Activated naive CD4-positive, alpha-beta T cell treated with anti-CD3 and anti-CD28 coated beads for 36 hours (primary cell): ENCODE measurements at regions of chr12 and their contacts with region 1.

Region 1: GRCh38 chr12:66829660-66830325 is 150.9 kb upstream of the GRIP1 start:
- DNase-seq: peak; percentile 49
- H3K4me3 Mint-ChIP-seq: no peak overlapping the region
- H3K27ac Mint-ChIP-seq: peak overlapping the region; percentile 34
- H3K4me1 Mint-ChIP-seq: peaks cover 41% of the 10 kb centered on the region
- H3K27me3 Mint-ChIP-seq: no peaks in the 10 kb centered on the region

Region 2: DNA sequence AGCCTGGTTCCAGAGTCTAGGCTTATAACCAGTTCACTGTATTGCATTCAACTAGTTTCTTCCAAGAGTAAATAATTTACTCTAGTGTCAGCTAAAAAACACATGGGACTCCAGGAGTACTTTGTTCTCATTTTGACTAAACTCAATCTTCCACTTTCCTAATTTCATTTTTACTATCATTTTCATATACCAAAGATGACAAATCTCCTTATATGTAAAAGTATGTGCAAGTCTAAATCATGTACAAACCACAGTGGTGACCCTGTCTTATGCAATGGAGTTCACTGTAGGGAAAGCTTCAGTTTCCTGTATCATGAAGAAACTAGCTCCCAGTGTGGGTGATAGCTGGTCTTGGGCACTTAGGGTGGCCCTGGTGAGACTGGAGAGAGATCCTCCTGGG is 375.9 kb before region 1 on chr12:
- CTCF ChIA-PET with region 1: no interaction called
- intact Hi-C with region 1: no loop called
- DNase-seq: peak; percentile 13
- H3K4me3 Mint-ChIP-seq: no peak overlapping the region
- H3K27ac Mint-ChIP-seq: no peak overlapping the region
- H3K4me1 Mint-ChIP-seq: peaks cover 8% of the 10 kb centered on the region
- H3K27me3 Mint-ChIP-seq: no peaks in the 10 kb centered on the region

Region 3: GRCh38 chr12:66813137-66813892 is 16.5 kb before region 1 on chr12:
- CTCF ChIA-PET with region 1: interaction called, 3 read pairs
- intact Hi-C with region 1: loop called (anchors 2 kb)
- DNase-seq: peak; percentile 62
- H3K4me3 Mint-ChIP-seq: no peak overlapping the region
- H3K27ac Mint-ChIP-seq: no peak overlapping the region
- H3K4me1 Mint-ChIP-seq: peaks cover 11% of the 10 kb centered on the region
- H3K27me3 Mint-ChIP-seq: no peaks in the 10 kb centered on the region

Region 4: GRCh38 chr12:67263471-67263870 is 433.7 kb after region 1 on chr12:
- CTCF ChIA-PET with region 1: no interaction called
- intact Hi-C with region 1: no loop called
- DNase-seq: no peak
- H3K4me3 Mint-ChIP-seq: no peak overlapping the region
- H3K27ac Mint-ChIP-seq: no peak overlapping the region
- H3K4me1 Mint-ChIP-seq: peaks cover 3% of the 10 kb centered on the region
- H3K27me3 Mint-ChIP-seq: no peaks in the 10 kb centered on the region